PC-9 (cell line): ENCODE measurements at regions of chr3 and their contacts with region 1.

Region 1: GRCh38 chr3:138915503-138916498 is 31.1 kb downstream of the FOXL2 start:
- DNase-seq: peak; percentile 83 to 97
- H3K4me3 ChIP-seq: peak overlapping the region; percentile 75
- H3K27ac ChIP-seq: peak overlapping the region; percentile 88
- H3K4me1 ChIP-seq: peaks cover 52% of the 10 kb centered on the region
- H3K27me3 ChIP-seq: no peaks in the 10 kb centered on the region
- CTCF ChIP-seq: peak; percentile 82

Region 2: GRCh38 chr3:138479438-138479863 is 436.4 kb before region 1 on chr3:
- CTCF ChIA-PET with region 1: interaction called, 7 read pairs
- POLR2A ChIA-PET with region 1: no interaction called
- intact Hi-C with region 1: loop called (anchors 5 kb)
- DNase-seq: no peak
- H3K4me3 ChIP-seq: no peak overlapping the region
- H3K27ac ChIP-seq: no peak overlapping the region
- H3K4me1 ChIP-seq: no peaks in the 10 kb centered on the region
- H3K27me3 ChIP-seq: no peaks in the 10 kb centered on the region
- CTCF ChIP-seq: peak; percentile 66

Region 3: GRCh38 chr3:138694287-138695007 is 221.4 kb before region 1 on chr3:
- CTCF ChIA-PET with region 1: interaction called, 23 read pairs
- POLR2A ChIA-PET with region 1: interaction called, 4 read pairs
- intact Hi-C with region 1: loop called (anchors 1 kb)
- DNase-seq: peak; percentile 52 to 94
- H3K4me3 ChIP-seq: no peak overlapping the region
- H3K27ac ChIP-seq: peak overlapping the region; percentile 71
- H3K4me1 ChIP-seq: peaks cover 26% of the 10 kb centered on the region
- H3K27me3 ChIP-seq: no peaks in the 10 kb centered on the region
- CTCF ChIP-seq: no peak

Region 4: GRCh38 chr3:138774529-138775253 is 141.1 kb before region 1 on chr3:
- CTCF ChIA-PET with region 1: interaction called, 5 read pairs
- POLR2A ChIA-PET with region 1: no interaction called
- intact Hi-C with region 1: loop called (anchors 2 kb)
- DNase-seq: peak; percentile 45 to 93
- H3K4me3 ChIP-seq: no peak overlapping the region
- H3K27ac ChIP-seq: peak overlapping the region; percentile 54
- H3K4me1 ChIP-seq: peaks cover 19% of the 10 kb centered on the region
- H3K27me3 ChIP-seq: no peaks in the 10 kb centered on the region
- CTCF ChIP-seq: no peak

Region 5: GRCh38 chr3:138834359-138835212 is 81.2 kb before region 1 on chr3 and contains the start of gene PIK3CB:
- CTCF ChIA-PET with region 1: interaction called, 4 read pairs
- POLR2A ChIA-PET with region 1: no interaction called
- intact Hi-C with region 1: loop called (anchors 1 kb)
- DNase-seq: peak; percentile 63 to 92
- H3K4me3 ChIP-seq: peak within 1 kb of the TSS; percentile 63
- H3K27ac ChIP-seq: peak within 1 kb of the TSS; percentile 92
- H3K4me1 ChIP-seq: peaks cover 16% of the 10 kb centered on the region
- H3K27me3 ChIP-seq: no peaks in the 10 kb centered on the region
- CTCF ChIP-seq: peak; percentile 34; the same call in 1 of the 2 replicates
- total RNA-seq, gene PIK3CB: 41.9 and 47.8 TPM in 2 replicates

Region 6: GRCh38 chr3:138862924-138863775 is 52.7 kb before region 1 on chr3:
- CTCF ChIA-PET with region 1: interaction called, 15 read pairs
- POLR2A ChIA-PET with region 1: no interaction called
- intact Hi-C with region 1: loop called (anchors 1 kb)
- DNase-seq: peak; percentile 78 to 97
- H3K4me3 ChIP-seq: peak overlapping the region; percentile 39; the same call in 1 of the 2 replicates
- H3K27ac ChIP-seq: peak overlapping the region; percentile 100
- H3K4me1 ChIP-seq: peaks cover 35% of the 10 kb centered on the region
- H3K27me3 ChIP-seq: no peaks in the 10 kb centered on the region
- CTCF ChIP-seq: no peak

Region 7: DNA sequence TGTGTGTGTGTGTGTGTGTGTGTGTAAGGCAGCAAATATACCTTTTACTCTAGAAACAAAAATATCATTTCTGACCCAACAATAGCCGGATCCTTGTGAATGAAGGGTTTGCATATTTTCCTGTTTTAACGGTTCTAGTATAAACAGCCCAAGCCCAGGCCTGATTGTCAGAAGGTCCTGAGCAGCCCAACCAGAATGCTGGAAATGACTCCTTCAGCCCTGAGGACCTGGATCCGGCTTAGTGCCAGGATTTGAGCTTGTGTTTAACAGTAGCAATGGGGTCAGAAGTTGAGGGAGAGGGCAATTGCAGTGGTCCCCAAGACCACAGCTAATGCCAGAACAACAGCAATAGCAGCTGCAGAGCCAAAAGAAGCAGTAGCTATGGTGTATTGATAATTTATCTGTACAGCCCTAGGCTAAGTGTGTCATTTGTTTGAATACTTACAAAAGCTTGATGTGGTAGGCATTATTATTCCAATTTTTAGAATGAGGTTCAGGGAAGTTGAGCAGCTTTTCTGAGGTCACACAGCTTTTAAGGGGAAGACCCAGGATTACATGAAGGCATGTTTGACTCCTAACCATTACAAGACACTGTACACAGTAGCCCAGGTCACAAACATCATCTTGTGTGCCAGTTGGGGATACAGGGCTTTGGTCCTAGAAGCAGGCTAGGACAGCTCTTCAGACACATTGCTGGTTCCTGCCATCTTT is 18.3 kb after region 1 on chr3:
- CTCF ChIA-PET with region 1: no interaction called
- POLR2A ChIA-PET with region 1: no interaction called
- intact Hi-C with region 1: no loop called
- DNase-seq: no peak
- H3K4me3 ChIP-seq: no peak overlapping the region
- H3K27ac ChIP-seq: no peak overlapping the region
- H3K4me1 ChIP-seq: 0 out of 2 replicates have a peak, but pooled peaks cover 6% of the 10 kb centered on the region
- H3K27me3 ChIP-seq: no peaks in the 10 kb centered on the region
- CTCF ChIP-seq: no peak

Region 8: GRCh38 chr3:139037478-139037877 is 121.7 kb after region 1 on chr3:
- CTCF ChIA-PET with region 1: no interaction called
- POLR2A ChIA-PET with region 1: no interaction called
- intact Hi-C with region 1: no loop called
- DNase-seq: no peak
- H3K4me3 ChIP-seq: no peak overlapping the region
- H3K27ac ChIP-seq: no peak overlapping the region
- H3K4me1 ChIP-seq: no peaks in the 10 kb centered on the region
- H3K27me3 ChIP-seq: peaks cover 12% of the 10 kb centered on the region
- CTCF ChIP-seq: no peak

Region 9: GRCh38 chr3:139052802-139053600 is 137.2 kb after region 1 on chr3:
- CTCF ChIA-PET with region 1: no interaction called
- POLR2A ChIA-PET with region 1: no interaction called
- intact Hi-C with region 1: no loop called
- DNase-seq: no peak
- H3K4me3 ChIP-seq: no peak overlapping the region
- H3K27ac ChIP-seq: no peak overlapping the region
- H3K4me1 ChIP-seq: no peaks in the 10 kb centered on the region
- H3K27me3 ChIP-seq: no peaks in the 10 kb centered on the region
- CTCF ChIP-seq: no peak